ENCODE measurements at regions of chr20 and their contacts with region 1.

Region 1: DNA sequence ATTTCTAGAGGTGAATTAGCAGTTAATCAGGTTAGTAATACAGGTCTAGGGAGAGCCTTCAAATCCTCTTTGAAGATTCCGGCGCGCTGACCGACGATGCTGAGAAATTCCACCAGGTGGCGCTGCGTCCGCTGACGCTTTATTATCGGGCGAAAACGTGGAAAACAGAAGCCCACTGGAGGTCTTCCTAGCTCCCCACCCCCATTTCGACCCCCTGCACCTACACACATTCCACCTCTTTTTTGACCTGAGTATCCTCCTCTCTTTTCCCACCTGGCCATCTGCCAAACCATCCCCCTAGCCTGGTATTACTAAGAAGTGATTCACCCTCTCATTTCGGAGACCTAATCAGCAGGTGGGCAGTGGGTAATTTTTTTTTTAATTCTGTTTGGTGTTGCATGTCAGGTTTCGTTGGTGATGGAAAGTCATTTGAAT is 65.4 kb upstream of the RIN2 start:
- DNase-seq: peak; percentile 58
- H3K4me3 Mint-ChIP-seq: no peak overlapping the region
- H3K27ac Mint-ChIP-seq: peak overlapping the region; percentile 39
- H3K4me1 Mint-ChIP-seq: peaks cover 23% of the 10 kb centered on the region
- H3K27me3 Mint-ChIP-seq: no peaks in the 10 kb centered on the region
- CTCF ChIP-seq: peak; percentile 92

Region 2: GRCh38 chr20:19735446-19735845 is 42.7 kb after region 1 on chr20:
- CTCF ChIA-PET with region 1: interaction called, 29 read pairs
- POLR2A ChIA-PET with region 1: interaction called, 20 read pairs
- intact Hi-C with region 1: loop called (anchors 2 kb)
- DNase-seq: peak; percentile 96
- H3K4me3 Mint-ChIP-seq: peak overlapping the region; percentile 27
- H3K27ac Mint-ChIP-seq: peak overlapping the region; percentile 87
- H3K4me1 Mint-ChIP-seq: peaks cover 25% of the 10 kb centered on the region
- H3K27me3 Mint-ChIP-seq: no peaks in the 10 kb centered on the region
- CTCF ChIP-seq: no peak

Region 3: GRCh38 chr20:19774135-19774933 is 81.6 kb after region 1 on chr20:
- CTCF ChIA-PET with region 1: interaction called, 17 read pairs
- POLR2A ChIA-PET with region 1: interaction called, 4 read pairs
- intact Hi-C with region 1: no loop called
- DNase-seq: no peak
- H3K4me3 Mint-ChIP-seq: no peak overlapping the region
- H3K27ac Mint-ChIP-seq: no peak overlapping the region
- H3K4me1 Mint-ChIP-seq: peaks cover 6% of the 10 kb centered on the region
- H3K27me3 Mint-ChIP-seq: no peaks in the 10 kb centered on the region
- CTCF ChIP-seq: no peak

Region 4: GRCh38 chr20:19828232-19828631 is 135.5 kb after region 1 on chr20:
- CTCF ChIA-PET with region 1: interaction called, 22 read pairs
- POLR2A ChIA-PET with region 1: interaction called, 5 read pairs
- intact Hi-C with region 1: loop called (anchors 1 kb)
- DNase-seq: peak; percentile 72
- H3K4me3 Mint-ChIP-seq: peak overlapping the region; percentile 9
- H3K27ac Mint-ChIP-seq: peak overlapping the region; percentile 60
- H3K4me1 Mint-ChIP-seq: peaks cover 17% of the 10 kb centered on the region
- H3K27me3 Mint-ChIP-seq: no peaks in the 10 kb centered on the region
- CTCF ChIP-seq: peak; percentile 46

Region 5: DNA sequence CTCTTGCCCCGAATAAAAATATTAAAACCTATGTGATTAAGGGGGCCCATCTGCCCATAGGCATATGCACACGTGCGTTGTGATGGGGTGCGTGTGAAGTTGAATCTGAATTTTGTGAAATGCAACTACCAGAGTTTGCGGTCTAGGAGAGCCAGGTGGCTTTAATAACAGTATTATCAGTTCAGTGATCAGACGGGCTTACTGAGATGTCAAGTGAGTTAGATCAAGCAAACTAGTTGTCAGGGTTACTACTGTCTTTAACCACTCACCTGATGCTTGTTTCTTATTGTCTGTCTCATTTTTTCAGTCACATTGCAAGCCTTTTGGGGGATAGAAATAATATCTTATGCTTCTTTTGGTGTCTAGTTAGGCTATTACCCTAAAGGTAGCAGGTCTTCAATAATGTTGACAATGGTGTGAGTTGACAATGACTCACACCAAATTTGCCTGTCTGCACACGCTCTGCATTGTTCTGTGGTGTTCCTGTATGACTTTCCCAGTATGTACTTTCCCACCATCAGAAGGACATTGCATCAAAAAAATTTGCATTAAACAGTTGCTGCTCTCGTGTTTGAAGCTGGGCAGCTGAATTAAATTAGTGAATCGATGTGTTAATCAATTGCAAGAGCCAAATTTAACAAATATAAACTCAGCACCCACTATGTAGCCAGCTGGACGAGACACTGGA is 221.4 kb after region 1 on chr20:
- CTCF ChIA-PET with region 1: interaction called, 11 read pairs
- POLR2A ChIA-PET with region 1: no interaction called
- intact Hi-C with region 1: no loop called
- DNase-seq: peak; percentile 94
- H3K4me3 Mint-ChIP-seq: no peak overlapping the region
- H3K27ac Mint-ChIP-seq: peak overlapping the region; percentile 82
- H3K4me1 Mint-ChIP-seq: peaks cover 46% of the 10 kb centered on the region
- H3K27me3 Mint-ChIP-seq: no peaks in the 10 kb centered on the region
- CTCF ChIP-seq: no peak

Measured in MCF 10A (cell line).